ENCODE measurements at regions of chr3 and their contacts with region 1.

Region 1: DNA sequence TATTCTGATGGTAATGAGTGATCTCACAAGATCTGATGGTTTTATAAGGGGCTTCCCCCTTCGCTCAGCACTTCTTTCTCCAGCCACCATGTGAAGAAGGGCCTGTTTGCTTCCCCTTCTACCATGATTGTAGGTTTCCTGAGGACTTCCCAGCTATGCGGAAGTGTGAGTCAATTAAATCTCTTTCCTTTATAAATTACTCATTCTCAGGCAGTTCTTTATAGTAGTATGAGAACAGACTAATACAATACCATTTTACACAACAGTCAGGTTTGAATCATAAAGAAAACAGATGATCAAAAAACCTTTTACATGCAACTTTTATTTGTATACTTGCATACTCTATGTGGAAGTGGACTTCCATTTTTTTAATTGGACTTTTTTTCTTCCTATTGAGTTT is 46.7 kb upstream of the CBLB start:
- DNase-seq: no peak
- ATAC-seq: no peak

Region 2: DNA sequence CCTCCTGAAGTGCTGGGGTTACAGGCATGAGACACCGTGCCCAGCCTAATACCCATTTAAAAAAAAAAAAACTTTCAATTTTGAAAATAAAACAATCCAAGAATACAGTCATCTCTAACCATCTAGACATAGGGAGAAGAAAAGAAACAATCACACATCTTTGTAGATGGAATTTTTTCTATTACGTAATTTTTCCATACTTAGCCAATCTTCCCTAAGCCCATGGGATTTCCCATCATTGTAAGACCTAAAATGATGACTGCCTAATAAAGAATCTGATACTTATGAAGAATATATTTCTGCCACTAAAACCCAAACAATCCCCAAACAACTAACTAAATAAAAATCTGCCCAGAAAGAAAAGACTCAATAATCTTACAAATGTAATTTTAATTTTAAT is 135.4 kb before region 1 on chr3:
- intact Hi-C with region 1: no loop called
- DNase-seq: no peak
- ATAC-seq: no peak

Region 3: DNA sequence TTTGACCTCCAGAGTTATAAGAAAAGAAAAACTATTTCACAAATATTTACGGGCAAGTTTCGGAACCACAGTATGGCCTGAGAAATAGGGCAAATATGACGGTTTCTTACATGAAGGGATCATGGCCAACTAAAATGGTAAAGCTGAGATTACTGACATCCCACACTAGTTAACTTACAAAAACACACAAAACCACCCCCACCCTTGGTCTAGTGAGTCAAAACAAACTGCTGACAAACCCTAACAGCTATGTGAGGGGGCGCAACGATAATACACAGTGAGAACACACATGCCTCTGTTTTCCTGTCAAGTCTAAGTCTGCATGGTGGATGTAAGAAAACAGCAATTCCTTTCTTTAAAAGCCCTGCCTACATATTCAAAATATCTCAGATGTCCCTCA is 79.0 kb before region 1 on chr3:
- intact Hi-C with region 1: no loop called
- DNase-seq: no peak
- ATAC-seq: peak; percentile 18

Region 4: DNA sequence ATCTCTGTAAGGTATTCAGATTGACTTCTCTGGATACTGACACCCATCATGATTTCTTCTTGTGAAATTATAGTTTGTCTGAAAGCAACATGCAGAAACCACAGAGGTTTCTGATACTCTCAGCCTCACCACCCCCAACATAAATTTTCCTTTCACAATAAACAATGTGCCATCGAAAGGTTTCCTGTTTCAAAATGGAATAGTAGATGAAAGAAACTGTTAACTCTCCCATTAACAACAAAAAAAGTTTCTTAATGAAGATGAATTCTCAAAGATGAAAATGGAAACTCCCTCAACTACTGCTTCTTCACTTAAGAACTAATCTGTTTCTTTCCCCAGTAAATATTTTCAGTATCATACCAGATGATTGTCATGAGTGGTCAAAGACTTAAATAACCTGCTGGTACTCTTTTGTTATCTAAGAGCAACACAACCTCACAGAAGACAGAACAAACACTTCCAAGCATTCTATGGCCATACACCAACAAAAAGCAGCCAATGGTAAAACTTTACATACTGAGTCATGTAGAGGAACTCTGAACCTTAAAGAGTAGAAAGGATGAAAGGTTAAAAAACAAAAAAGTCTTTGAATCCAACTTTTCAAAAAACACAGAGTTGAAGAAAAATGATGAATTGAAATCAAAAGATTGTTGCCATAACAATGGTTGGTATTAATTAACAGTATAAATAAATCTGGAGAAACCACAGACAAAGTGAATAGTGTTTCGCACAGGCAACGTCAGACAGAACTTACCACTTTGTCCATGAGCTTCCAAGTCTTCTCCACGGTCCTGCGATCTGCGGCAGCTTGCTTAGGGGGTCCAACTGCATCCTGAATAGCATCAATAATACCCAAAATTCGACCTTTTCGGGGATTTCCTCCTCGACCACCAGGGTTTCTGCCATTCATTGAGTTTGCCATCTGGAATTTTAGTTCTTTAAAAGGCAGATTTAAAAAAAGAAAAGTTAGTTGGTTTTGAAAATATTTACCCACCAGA is 48.6 kb before region 1 on chr3:
- intact Hi-C with region 1: no loop called
- DNase-seq: no peak
- ATAC-seq: no peak

Region 5: DNA sequence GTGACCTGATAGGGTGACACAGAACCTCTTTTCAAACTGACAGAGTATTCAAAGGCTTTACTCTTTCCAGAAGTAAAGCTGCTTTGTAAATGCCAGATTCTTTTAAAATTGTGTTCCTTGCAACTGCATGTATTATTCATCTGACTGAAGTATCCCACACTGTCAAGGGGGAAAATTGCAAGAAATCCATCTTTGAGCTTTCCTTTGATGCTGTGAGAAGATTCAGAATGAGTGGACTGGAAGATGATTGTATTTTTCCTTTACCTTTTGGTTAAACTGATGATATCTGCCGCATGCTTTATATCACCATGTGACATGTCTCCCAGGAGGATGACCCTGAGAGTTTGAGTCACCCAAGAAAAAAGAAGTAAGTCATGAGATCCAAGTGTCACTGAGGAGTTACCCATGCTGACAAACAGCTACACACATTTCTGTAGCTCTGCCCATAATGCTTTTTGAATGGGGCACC is 204.1 kb after region 1 on chr3:
- intact Hi-C with region 1: loop called (anchors 10 kb)
- DNase-seq: no peak
- ATAC-seq: no peak

Region 6: GRCh38 chr3:106176734-106177133 is 261.2 kb after region 1 on chr3:
- intact Hi-C with region 1: no loop called
- DNase-seq: no peak
- ATAC-seq: no peak

Measured in Right ventricle myocardium superior (tissue), 1 donor.